PC-3 (cell line): ENCODE measurements at regions of chr17 and their contacts with region 1.

Region 1: DNA sequence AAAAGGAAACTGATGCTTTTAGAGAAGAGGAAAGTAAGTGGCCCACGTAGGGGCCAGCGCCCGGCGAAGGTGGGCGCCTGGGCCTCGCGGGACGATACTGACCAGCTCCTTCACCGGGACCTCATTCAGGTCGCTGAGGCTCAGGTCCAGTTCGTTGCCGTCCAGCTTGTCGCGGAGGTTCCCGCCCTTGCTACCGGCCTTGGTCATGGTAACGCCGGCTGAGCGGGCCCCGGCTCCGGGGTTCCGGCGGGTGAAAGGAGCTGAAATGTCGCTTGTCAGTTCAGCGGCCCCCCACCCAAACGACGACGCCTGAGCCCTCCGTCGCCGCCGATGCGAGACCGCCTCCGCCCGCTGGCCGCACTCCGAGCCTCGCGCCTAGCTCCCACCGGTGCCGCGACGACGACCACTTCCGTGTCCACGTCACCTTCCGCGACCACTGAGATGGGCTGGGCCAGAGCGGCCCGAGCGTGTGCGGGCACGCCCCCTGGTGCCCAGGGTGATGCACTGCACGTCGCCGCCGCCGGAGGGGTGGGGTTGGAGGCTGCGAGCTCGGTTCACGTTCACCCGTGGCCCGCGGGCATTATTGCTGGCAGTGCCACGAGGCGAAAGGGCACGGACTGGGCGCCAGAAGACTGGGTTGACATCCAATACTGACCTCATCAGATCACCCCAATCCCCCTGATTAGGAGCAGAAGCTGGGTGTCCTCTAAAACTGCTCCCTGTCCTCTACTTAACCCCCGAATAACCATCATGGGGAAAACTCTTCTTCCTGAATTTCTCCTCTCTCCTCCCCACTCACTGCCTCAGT is at the start of gene LRRC59:
- DNase-seq: peak; percentile 90
- ATAC-seq: peak; percentile 76
- H3K4me3 ChIP-seq: peak within 1 kb of the TSS; percentile 73
- H3K27ac ChIP-seq: peak within 1 kb of the TSS; percentile 84
- H3K4me1 ChIP-seq: peaks cover 37% of the 10 kb centered on the region
- H3K27me3 ChIP-seq: no peaks in the 10 kb centered on the region
- CTCF ChIP-seq: peak; percentile 95
- total RNA-seq, gene LRRC59: 324 and 427 TPM in 2 replicates

Region 2: GRCh38 chr17:50345432-50346312 is 51.6 kb before region 1 on chr17 and contains the start of gene XYLT2:
- CTCF ChIA-PET with region 1: interaction called, 10 read pairs
- POLR2A ChIA-PET with region 1: no interaction called
- intact Hi-C with region 1: no loop called
- DNase-seq: peak; percentile 93
- ATAC-seq: peak; percentile 83
- H3K4me3 ChIP-seq: peak within 1 kb of the TSS; percentile 95
- H3K27ac ChIP-seq: no peak within 1 kb of the TSS
- H3K4me1 ChIP-seq: peaks cover 26% of the 10 kb centered on the region
- H3K27me3 ChIP-seq: no peaks in the 10 kb centered on the region
- CTCF ChIP-seq: no peak
- total RNA-seq, gene XYLT2: 53.5 and 54.3 TPM in 2 replicates

Region 3: DNA sequence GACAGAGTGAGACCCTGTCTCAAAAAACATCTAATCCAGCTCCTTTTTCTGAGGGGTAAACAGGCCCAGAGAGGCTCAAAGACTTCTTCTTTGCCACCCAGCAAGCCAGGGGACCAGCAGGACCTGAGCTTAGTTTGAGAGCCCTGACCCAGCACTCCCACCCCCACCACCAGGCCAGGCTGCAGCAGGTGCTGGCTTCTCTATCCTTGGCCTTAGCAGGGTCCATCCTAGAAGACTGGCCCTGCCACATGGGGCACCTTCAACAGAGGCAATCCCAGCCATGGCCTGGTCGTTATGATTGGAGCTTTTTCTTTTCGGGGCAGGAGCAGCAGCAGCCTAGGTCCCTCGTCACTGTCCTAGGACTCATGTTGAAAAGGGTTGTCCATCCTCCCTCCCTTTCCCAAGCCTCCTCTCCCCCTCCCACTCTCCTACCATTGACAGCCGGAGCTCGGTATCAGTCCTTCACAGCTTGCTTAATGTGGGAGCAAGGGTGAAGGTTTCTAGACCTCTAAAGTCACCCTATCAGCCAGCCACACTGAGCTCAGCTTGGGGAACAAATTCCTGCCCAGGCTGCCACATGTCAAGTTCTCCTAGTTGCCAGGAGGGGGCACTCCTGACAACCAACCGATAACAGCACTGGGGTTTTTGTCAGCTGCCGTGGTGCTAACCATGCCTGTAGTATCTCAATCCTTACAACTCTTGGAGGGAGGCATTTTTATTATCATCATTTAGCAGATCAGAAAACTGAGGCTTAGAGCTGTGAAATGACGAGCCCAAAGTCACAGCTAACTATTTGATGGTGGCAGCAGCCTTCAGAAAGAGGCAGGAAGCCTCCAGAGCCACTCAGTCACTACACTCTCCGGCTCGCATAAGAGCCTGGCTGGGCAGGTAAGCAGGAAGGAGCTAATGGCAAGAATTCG is 35.5 kb before region 1 on chr17:
- CTCF ChIA-PET with region 1: interaction called, 15 read pairs
- POLR2A ChIA-PET with region 1: no interaction called
- intact Hi-C with region 1: loop called (anchors 1 kb)
- DNase-seq: peak; percentile 79
- ATAC-seq: peak; percentile 75
- H3K4me3 ChIP-seq: no peak overlapping the region
- H3K27ac ChIP-seq: no peak overlapping the region
- H3K4me1 ChIP-seq: no peaks in the 10 kb centered on the region
- H3K27me3 ChIP-seq: no peaks in the 10 kb centered on the region
- CTCF ChIP-seq: peak; percentile 92

Region 4: GRCh38 chr17:50380369-50381259 is 16.7 kb before region 1 on chr17:
- CTCF ChIA-PET with region 1: no interaction called
- POLR2A ChIA-PET with region 1: no interaction called
- intact Hi-C with region 1: no loop called
- DNase-seq: peak; percentile 36
- ATAC-seq: peak; percentile 19
- H3K4me3 ChIP-seq: no peak overlapping the region
- H3K27ac ChIP-seq: no peak overlapping the region
- H3K4me1 ChIP-seq: no peaks in the 10 kb centered on the region
- H3K27me3 ChIP-seq: no peaks in the 10 kb centered on the region
- CTCF ChIP-seq: peak; percentile 47

Region 5: DNA sequence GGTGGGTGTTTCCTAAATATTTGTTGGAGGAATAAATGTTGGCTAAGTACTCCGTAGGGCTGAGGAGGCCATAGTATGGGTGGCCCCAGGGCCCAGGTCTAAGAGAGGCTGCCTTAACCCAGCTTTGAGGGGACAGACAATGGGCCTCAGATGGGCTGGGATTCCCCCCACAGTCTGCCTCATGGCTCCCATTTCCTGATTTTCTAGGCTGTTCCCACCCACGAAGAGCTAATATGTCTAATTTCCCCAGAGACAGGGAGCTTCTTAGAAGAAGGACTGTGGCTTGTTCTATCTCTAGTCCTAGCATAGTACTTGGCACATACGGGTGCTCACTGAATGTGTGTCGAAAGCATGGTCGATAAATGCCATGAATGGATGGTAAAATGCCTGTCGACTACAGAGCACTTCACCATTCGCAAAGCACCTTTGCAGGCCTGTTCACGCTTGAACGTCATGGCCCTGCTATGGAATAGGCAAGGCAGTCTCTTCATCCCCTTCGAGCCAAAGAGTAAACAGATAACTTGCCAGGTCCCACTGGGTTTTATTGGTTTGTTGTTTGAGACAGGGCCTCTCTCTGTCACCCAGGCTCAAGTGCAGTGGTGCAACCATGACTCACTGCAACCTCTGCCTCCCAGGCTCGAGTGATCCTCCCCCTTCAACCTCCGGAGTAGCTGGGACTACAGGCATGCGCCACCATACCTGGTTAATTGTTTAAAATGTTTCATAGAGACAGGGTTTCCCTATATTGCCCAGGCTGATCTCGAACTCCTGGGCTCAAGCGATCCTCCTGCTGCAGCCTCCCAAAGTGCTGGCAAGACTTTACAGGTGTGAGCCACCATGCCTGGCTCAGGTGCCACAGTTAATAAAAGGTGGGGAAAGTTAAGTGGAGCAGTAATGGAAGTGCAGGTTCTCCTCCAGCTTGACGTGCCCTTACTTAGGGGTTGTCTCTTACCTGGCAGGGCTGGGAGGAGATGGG is 61.7 kb after region 1 on chr17:
- CTCF ChIA-PET with region 1: interaction called, 4 read pairs
- POLR2A ChIA-PET with region 1: no interaction called
- intact Hi-C with region 1: loop called (anchors 1 kb)
- DNase-seq: peak; percentile 98
- ATAC-seq: peak; percentile 96
- H3K4me3 ChIP-seq: no peak overlapping the region
- H3K27ac ChIP-seq: peak overlapping the region; percentile 65
- H3K4me1 ChIP-seq: peaks cover 33% of the 10 kb centered on the region
- H3K27me3 ChIP-seq: no peaks in the 10 kb centered on the region
- CTCF ChIP-seq: no peak

Region 6: DNA sequence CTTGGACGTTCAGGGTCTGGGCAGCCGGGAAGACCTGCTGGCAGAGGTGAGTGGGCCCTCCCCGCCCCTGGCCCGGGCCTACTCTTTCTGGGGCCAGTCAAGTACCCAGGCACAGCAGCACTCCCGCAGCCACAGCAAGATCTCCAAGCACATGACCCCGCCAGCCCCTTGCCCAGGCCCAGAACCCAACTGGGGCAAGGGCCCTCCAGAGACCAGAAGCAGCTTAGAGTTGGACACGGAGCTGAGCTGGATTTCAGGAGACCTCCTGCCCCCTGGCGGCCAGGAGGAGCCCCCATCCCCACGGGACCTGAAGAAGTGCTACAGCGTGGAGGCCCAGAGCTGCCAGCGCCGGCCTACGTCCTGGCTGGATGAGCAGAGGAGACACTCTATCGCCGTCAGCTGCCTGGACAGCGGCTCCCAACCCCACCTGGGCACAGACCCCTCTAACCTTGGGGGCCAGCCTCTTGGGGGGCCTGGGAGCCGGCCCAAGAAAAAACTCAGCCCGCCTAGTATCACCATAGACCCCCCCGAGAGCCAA is 228.8 kb after region 1 on chr17:
- CTCF ChIA-PET with region 1: no interaction called
- POLR2A ChIA-PET with region 1: no interaction called
- intact Hi-C with region 1: loop called (anchors 10 kb)
- DNase-seq: peak; percentile 76
- ATAC-seq: peak; percentile 61
- H3K4me3 ChIP-seq: no peak overlapping the region
- H3K27ac ChIP-seq: no peak overlapping the region
- H3K4me1 ChIP-seq: peaks cover 23% of the 10 kb centered on the region
- H3K27me3 ChIP-seq: no peaks in the 10 kb centered on the region
- CTCF ChIP-seq: peak; percentile 92